ENCODE measurements at regions of chrX and their contacts with region 1.

Region 1: GRCh38 chrX:49915361-49916222 is 6.8 kb upstream of the CLCN5 start:
- DNase-seq: peak in 4 of 10 donors; percentile 8 to 40 (median 20)

Region 2: GRCh38 chrX:49053223-49054072 is 862.1 kb before region 1 on chrX:
- intact Hi-C with region 1: no loop called
- DNase-seq: peak in 8 of 10 donors; percentile 15 to 88 (median 50)

Region 3: GRCh38 chrX:50067435-50068284 is 152.1 kb after region 1 on chrX:
- intact Hi-C with region 1: loop called (anchors 5 kb)
- DNase-seq: peak in 8 of 10 donors; percentile 13 to 85 (median 31)

Region 4: DNA sequence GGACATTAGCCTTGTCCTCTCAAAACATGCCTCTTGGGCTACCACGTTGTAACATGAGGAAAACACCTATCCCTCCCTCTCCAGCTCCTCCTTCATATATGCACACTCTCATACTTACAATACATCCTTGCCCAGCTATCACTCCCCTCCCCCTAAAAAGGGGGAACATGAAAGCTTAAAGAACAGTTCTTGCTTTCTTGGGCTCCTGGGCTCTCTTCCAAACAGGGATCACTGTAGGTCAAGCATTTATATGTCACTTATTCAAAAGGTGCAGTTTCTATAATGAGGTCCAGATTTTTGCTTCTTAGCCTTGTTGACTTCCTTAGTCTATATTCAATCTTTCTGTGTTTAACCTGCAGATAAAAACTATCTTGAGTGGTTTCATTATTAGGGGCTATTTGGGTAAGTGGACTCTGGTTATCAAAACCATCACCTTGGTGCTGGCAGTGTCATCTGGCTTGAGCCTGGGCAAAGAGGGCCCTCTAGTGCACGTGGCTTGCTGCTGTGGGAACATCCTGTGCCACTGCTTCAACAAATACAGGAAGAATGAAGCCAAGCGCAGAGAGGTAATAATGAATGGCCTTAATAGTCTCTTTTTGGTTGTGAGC is 165.8 kb after region 1 on chrX:
- intact Hi-C with region 1: loop called (anchors 1 kb)
- DNase-seq: peak in 6 of 10 donors; percentile 6 to 85 (median 25)

Region 5: GRCh38 chrX:50579955-50580354 is 664.4 kb after region 1 on chrX:
- intact Hi-C with region 1: loop called (anchors 10 kb)
- DNase-seq: peak in 3 of 10 donors; percentile 4 to 33 (median 10)

Region 6: DNA sequence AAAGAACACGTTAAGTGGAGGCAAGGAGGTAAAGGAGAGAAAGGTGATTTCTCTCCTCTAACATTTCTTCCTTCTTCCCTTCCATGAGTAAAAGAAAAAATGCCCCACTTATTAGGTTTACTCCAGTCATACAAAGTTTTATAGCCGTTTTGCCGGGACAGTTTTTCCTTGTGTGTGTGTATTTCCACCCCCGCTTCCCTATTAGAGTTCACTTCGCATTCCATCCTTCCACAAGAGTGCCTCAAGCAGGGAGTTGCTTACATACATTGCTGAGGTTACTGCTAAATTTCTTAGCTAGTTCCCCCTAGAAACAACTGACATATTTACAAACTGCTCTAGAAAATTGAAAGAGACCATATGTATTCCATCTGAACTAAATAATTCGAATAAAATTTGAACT is 949.7 kb after region 1 on chrX:
- intact Hi-C with region 1: no loop called
- DNase-seq: no peak